Activated CD8-positive, alpha-beta T cell treated with anti-CD3 and anti-CD28 coated beads for 36 hours (primary cell): ENCODE measurements at regions of chr16 and their contacts with region 1.

Region 1: DNA sequence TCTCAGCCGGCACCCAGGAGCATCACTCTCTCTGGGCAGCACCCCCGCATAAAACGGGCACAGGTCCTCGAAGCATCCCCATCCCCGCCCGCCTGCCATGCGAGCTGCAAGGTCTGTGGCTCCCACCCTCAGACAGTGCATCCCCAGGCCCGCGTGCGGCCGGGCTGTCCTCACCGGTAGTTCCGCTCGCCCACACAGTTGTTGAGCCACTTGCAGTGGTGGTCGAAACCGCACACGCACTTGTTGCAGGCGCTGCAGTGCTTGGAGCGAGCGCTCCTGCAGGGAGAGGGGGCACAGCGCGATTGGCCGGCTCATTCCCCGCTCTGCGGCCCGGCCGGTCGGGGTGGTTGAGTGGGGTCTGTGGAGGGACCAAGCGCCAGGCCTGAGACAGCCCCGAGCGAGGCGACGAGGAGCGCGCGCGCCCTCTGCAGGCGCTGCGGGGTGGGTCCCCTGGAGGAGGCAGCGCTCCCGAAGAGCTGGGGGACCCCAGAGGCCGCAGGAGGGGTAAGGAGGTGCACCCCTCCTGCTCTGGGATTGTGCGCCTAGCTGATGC is 6.0 kb upstream of the TPPP3 start:
- DNase-seq: peak; percentile 65
- ATAC-seq: peak; percentile 91
- H3K4me3 Mint-ChIP-seq: no peak overlapping the region
- H3K27ac Mint-ChIP-seq: no peak overlapping the region
- H3K4me1 Mint-ChIP-seq: peaks cover under 1% of the 10 kb centered on the region
- H3K27me3 Mint-ChIP-seq: peaks cover 16% of the 10 kb centered on the region
- CTCF ChIP-seq: peak; percentile 94

Region 2: GRCh38 chr16:67260426-67261075 is 138.7 kb before region 1 on chr16:
- CTCF ChIA-PET with region 1: interaction called, 19 read pairs
- POLR2A ChIA-PET with region 1: no interaction called
- intact Hi-C with region 1: loop called (anchors 5 kb)
- DNase-seq: peak; percentile 48
- ATAC-seq: peak; percentile 66
- H3K4me3 Mint-ChIP-seq: no peak overlapping the region
- H3K27ac Mint-ChIP-seq: no peak overlapping the region
- H3K4me1 Mint-ChIP-seq: no peaks in the 10 kb centered on the region
- H3K27me3 Mint-ChIP-seq: no peaks in the 10 kb centered on the region
- CTCF ChIP-seq: peak; percentile 42

Region 3: DNA sequence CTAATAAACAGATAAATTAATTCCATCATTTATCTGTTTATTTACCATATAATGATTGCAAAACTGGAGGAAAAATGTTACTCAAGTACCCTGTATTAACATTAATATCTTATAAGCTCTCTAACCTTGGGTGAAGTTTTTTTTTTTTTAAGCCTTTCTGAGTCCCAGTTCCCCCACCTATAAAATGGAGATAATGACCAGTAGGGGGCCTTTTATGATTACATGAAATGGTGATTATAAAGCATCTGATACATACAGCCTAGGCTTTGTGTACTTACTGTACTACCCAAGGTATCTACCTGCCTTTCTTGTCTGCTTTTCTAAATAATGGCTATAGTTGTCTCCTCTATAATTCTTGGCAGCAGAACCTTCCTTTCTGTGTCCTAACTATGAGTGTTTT is 50.1 kb before region 1 on chr16:
- CTCF ChIA-PET with region 1: interaction called, 10 read pairs
- POLR2A ChIA-PET with region 1: no interaction called
- intact Hi-C with region 1: no loop called
- DNase-seq: no peak
- ATAC-seq: peak; percentile 62
- H3K4me3 Mint-ChIP-seq: no peak overlapping the region
- H3K27ac Mint-ChIP-seq: no peak overlapping the region
- H3K4me1 Mint-ChIP-seq: no peaks in the 10 kb centered on the region
- H3K27me3 Mint-ChIP-seq: peaks cover 2% of the 10 kb centered on the region
- CTCF ChIP-seq: peak; percentile 62

Region 4: DNA sequence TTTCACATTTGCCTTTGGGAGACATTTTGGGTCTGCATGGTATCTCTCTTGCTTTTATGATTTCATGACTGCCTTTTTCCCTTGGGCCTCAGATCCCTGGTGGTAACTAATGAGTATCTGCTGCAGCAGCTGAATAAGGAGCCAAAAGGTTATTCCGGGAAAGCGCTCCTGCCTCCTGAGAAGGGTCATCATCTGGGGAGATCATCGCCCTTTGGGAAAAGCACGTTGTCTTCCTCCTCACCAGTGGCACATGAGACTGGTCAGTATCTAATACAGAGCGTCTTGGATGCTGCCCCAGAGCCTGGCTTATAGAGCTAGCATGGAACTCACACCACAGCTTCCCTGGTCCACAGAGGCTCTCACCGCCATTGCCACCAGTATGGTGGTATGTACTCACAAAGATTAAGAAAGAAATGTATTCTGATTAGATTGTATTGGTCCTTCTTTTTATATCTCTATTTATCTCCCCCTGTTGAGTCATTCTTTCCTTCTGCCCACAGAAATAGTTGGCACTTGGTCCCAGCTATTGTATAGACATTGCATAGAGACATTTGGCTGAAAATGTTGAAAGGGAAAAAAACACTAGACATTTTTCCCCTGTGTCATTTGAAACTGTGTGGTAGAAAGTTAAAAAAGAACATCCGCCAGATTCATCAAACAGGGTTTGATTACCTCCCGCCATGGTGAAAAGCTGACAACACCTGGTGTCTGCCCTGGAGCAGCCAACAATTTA is 14.3 kb before region 1 on chr16:
- CTCF ChIA-PET with region 1: interaction called, 19 read pairs
- POLR2A ChIA-PET with region 1: interaction called, 4 read pairs
- intact Hi-C with region 1: no loop called
- DNase-seq: no peak
- ATAC-seq: peak; percentile 27
- H3K4me3 Mint-ChIP-seq: no peak overlapping the region
- H3K27ac Mint-ChIP-seq: no peak overlapping the region
- H3K4me1 Mint-ChIP-seq: peaks cover 9% of the 10 kb centered on the region
- H3K27me3 Mint-ChIP-seq: no peaks in the 10 kb centered on the region
- CTCF ChIP-seq: no peak